ENCODE measurements at regions of chr20 and their contacts with region 1.

Region 1: GRCh38 chr20:10090588-10091166 is 55.9 kb downstream of the ANKEF1 start:
- DNase-seq: peak; percentile 69
- H3K4me3 Mint-ChIP-seq: no peak overlapping the region
- H3K27ac Mint-ChIP-seq: no peak overlapping the region
- H3K4me1 Mint-ChIP-seq: peaks cover 11% of the 10 kb centered on the region
- H3K27me3 Mint-ChIP-seq: no peaks in the 10 kb centered on the region
- CTCF ChIP-seq: peak; percentile 57

Region 2: DNA sequence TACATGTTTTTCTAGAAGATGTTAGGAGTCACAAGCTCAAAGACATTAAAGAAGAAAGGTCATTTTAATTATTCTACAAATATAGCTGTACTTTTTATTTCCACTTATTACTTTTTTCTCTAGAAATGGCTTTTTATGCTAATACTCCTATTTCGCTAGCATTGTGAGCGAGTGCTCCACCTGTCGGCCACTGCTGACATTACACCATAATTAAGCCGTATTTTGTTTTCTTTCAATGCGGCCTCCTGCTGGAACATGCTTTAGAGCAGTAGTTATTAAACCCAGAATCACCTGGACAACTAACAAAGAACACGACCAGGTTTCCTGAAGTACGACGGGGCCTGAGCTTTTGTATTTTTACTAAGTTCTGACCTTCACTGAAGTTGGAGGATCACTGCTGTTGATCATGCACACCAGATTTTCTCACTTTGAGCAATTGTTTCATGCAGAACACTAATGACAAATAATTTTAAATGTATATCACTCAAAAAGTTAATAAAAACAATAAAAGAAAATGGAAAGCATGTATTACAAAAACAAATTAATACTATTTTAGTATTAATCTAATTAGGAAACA is 177.7 kb before region 1 on chr20:
- CTCF ChIA-PET with region 1: interaction called, 10 read pairs
- POLR2A ChIA-PET with region 1: no interaction called
- intact Hi-C with region 1: no loop called
- DNase-seq: peak; percentile 56
- H3K4me3 Mint-ChIP-seq: no peak overlapping the region
- H3K27ac Mint-ChIP-seq: no peak overlapping the region
- H3K4me1 Mint-ChIP-seq: no peaks in the 10 kb centered on the region
- H3K27me3 Mint-ChIP-seq: peaks cover 18% of the 10 kb centered on the region
- CTCF ChIP-seq: peak; percentile 64

Region 3: DNA sequence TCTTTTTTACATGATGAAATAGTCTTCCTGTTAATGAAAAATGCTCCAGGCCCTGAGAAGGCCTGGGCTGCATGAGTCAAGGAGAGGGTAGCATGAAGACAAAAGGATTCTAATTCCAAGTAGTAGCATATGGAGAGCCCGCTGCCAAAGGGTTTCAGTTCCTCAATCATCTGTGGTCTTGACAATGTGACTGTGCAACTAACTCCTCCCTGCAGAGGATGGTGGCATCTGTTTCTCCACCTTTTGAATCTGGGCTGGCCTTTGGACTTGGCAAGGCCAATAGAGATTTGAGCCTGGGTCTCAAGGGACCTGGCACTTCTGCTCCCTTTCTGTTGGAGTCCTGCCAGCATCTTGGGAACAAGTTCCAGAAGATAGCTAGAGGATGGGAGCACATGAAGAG is 91.0 kb before region 1 on chr20:
- CTCF ChIA-PET with region 1: interaction called, 27 read pairs
- POLR2A ChIA-PET with region 1: interaction called, 5 read pairs
- intact Hi-C with region 1: no loop called
- DNase-seq: no peak
- H3K4me3 Mint-ChIP-seq: no peak overlapping the region
- H3K27ac Mint-ChIP-seq: no peak overlapping the region
- H3K4me1 Mint-ChIP-seq: no peaks in the 10 kb centered on the region
- H3K27me3 Mint-ChIP-seq: no peaks in the 10 kb centered on the region
- CTCF ChIP-seq: no peak

Region 4: GRCh38 chr20:10074513-10074912 is 16.2 kb before region 1 on chr20:
- CTCF ChIA-PET with region 1: interaction called, 95 read pairs
- POLR2A ChIA-PET with region 1: interaction called, 12 read pairs
- intact Hi-C with region 1: no loop called
- DNase-seq: peak; percentile 89
- H3K4me3 Mint-ChIP-seq: peak overlapping the region; percentile 33
- H3K27ac Mint-ChIP-seq: peak overlapping the region; percentile 20
- H3K4me1 Mint-ChIP-seq: peaks cover 39% of the 10 kb centered on the region
- H3K27me3 Mint-ChIP-seq: no peaks in the 10 kb centered on the region
- CTCF ChIP-seq: no peak

Region 5: GRCh38 chr20:10357974-10358373 is 267.3 kb after region 1 on chr20:
- CTCF ChIA-PET with region 1: interaction called, 4 read pairs
- POLR2A ChIA-PET with region 1: no interaction called
- intact Hi-C with region 1: loop called (anchors 5 kb)
- DNase-seq: no peak
- H3K4me3 Mint-ChIP-seq: no peak overlapping the region
- H3K27ac Mint-ChIP-seq: no peak overlapping the region
- H3K4me1 Mint-ChIP-seq: peaks cover 3% of the 10 kb centered on the region
- H3K27me3 Mint-ChIP-seq: no peaks in the 10 kb centered on the region
- CTCF ChIP-seq: peak; percentile 48

Region 6: DNA sequence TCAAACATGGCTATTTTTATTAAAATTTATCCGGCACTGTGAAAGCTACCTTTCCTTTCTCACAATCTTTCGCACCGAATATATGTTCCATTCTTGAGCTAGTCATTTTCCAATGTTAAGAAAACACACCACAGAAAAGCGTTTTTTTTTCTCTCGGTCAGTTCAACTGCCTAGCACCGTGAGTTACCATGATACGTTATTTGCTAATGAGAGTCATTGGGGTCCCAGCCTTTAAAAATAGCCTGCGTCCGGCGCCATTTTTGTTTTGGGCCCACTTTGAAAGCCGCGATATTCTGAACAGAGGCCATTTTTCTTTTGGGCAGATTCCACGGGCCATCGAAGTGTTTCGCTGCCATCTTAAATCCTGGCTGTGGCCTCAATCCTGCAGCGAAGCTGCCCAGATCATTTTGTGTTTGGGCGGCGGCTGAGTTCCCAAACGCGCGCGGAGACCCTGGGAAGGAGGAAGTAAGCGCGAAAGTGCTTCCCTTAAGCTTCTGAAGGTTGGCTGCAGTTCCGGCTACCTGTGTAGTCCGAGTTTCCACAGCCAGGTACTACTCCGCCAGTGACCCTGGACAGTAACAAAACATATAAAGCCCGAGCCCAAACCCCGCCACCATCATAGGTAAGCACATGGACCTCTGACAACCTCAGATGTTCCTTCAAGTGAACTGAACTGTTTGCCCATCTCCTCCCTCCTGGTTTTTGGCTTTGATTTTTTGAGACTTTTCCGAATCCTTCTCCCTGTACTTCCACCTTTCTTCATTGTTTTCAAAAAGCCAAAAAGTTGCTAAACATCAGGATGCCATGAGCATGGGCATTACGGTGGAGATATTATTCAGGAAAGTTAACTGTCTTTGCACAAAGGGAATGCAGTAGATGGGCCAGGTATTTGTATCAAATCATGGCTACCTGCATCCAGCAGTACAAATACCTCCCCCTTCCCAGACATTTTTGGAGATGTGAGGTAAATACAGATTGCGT is 344.4 kb after region 1 on chr20 and contains the start of gene SLX4IP:
- CTCF ChIA-PET with region 1: interaction called, 18 read pairs
- POLR2A ChIA-PET with region 1: interaction called, 31 read pairs
- intact Hi-C with region 1: no loop called
- DNase-seq: peak; percentile 97
- H3K4me3 Mint-ChIP-seq: peak within 1 kb of the TSS; percentile 86
- H3K27ac Mint-ChIP-seq: peak within 1 kb of the TSS; percentile 94
- H3K4me1 Mint-ChIP-seq: peaks cover 12% of the 10 kb centered on the region
- H3K27me3 Mint-ChIP-seq: no peaks in the 10 kb centered on the region
- CTCF ChIP-seq: no peak
- total RNA-seq, gene SLX4IP: 11.2 and 12.9 TPM in 2 replicates